ENCODE measurements at regions of chr4 and their contacts with region 1.

Region 1: GRCh38 chr4:112604589-112604988 is 32.1 kb downstream of the ZGRF1 start:
- DNase-seq: peak in 1 of 2 donors; percentile 65
- ATAC-seq: peak in 1 of 3 donors; percentile 60
- H3K4me3 ChIP-seq: no peak overlapping the region
- H3K4me3 Mint-ChIP-seq: no peak overlapping the region
- H3K27ac ChIP-seq: no peak overlapping the region
- H3K27ac Mint-ChIP-seq: no peak overlapping the region
- H3K4me1 ChIP-seq: no peaks in the 10 kb centered on the region
- H3K4me1 Mint-ChIP-seq: no peaks in the 10 kb centered on the region
- H3K27me3 ChIP-seq: no peaks in the 10 kb centered on the region
- H3K27me3 Mint-ChIP-seq: no peaks in the 10 kb centered on the region
- CTCF ChIP-seq: peak; percentile 58

Region 2: GRCh38 chr4:112099701-112100297 is 504.8 kb before region 1 on chr4:
- intact Hi-C with region 1: loop called (anchors 1 kb)
- DNase-seq: peak in 1 of 2 donors; percentile 69
- ATAC-seq: peak in 2 of 3 donors; percentile 50 to 64
- H3K4me3 ChIP-seq: no peak overlapping the region
- H3K4me3 Mint-ChIP-seq: no peak overlapping the region
- H3K27ac ChIP-seq: no peak overlapping the region
- H3K27ac Mint-ChIP-seq: no peak overlapping the region
- H3K4me1 ChIP-seq: no peaks in the 10 kb centered on the region
- H3K4me1 Mint-ChIP-seq: peaks cover 0 to 7% of the 10 kb centered on the region in 2 donors
- H3K27me3 ChIP-seq: no peaks in the 10 kb centered on the region
- H3K27me3 Mint-ChIP-seq: peaks cover 16 to 22% of the 10 kb centered on the region in 2 donors
- CTCF ChIP-seq: peak; percentile 75

Region 3: GRCh38 chr4:112214390-112215264 is 390.0 kb before region 1 on chr4:
- intact Hi-C with region 1: loop called (anchors 10 kb)
- DNase-seq: peak in 1 of 2 donors; percentile 58
- ATAC-seq: no peak
- H3K4me3 ChIP-seq: no peak overlapping the region
- H3K4me3 Mint-ChIP-seq: no peak overlapping the region
- H3K27ac ChIP-seq: no peak overlapping the region
- H3K27ac Mint-ChIP-seq: no peak overlapping the region
- H3K4me1 ChIP-seq: no peaks in the 10 kb centered on the region
- H3K4me1 Mint-ChIP-seq: no peaks in the 10 kb centered on the region
- H3K27me3 ChIP-seq: no peaks in the 10 kb centered on the region
- H3K27me3 Mint-ChIP-seq: peaks cover 0 to 4% of the 10 kb centered on the region in 2 donors
- CTCF ChIP-seq: peak; percentile 51